Activated CD4-positive, alpha-beta T cell treated with anti-CD3 and anti-CD28 coated beads for 36 hours (primary cell): ENCODE measurements at regions of chr3 and their contacts with region 1.

Region 1: GRCh38 chr3:171187706-171188290 is 161.3 kb upstream of the SLC2A2 start:
- DNase-seq: no peak
- ATAC-seq: no peak
- H3K4me3 Mint-ChIP-seq: no peak overlapping the region
- H3K27ac Mint-ChIP-seq: no peak overlapping the region
- H3K4me1 Mint-ChIP-seq: peaks cover 51% of the 10 kb centered on the region
- H3K27me3 Mint-ChIP-seq: no peaks in the 10 kb centered on the region

Region 2: DNA sequence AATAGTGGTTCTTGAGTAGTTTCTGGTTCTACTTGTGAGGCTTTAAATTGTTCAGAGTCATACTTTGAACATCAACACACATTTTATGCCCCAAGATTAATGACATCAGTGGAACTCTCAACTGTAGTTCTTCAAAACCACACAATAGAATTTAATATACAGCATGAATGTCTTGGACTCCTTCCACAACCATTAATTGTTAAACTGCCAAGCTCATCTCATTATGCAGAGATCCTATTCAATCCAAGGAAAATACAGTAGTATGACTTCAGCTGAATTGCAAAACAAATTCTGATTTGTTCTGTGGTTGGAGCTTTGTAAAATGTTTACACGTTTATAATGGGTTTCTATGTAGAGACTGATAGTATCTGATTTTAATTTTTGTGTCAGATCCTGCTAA is 37.9 kb after region 1 on chr3:
- CTCF ChIA-PET with region 1: interaction called, 3 read pairs
- POLR2A ChIA-PET with region 1: interaction called, 4 read pairs
- intact Hi-C with region 1: loop called (anchors 5 kb)
- DNase-seq: no peak
- ATAC-seq: no peak
- H3K4me3 Mint-ChIP-seq: no peak overlapping the region
- H3K27ac Mint-ChIP-seq: peak overlapping the region; percentile 72
- H3K4me1 Mint-ChIP-seq: peaks cover 46% of the 10 kb centered on the region
- H3K27me3 Mint-ChIP-seq: no peaks in the 10 kb centered on the region

Region 3: GRCh38 chr3:171269542-171269941 is 81.7 kb after region 1 on chr3:
- CTCF ChIA-PET with region 1: no interaction called
- POLR2A ChIA-PET with region 1: no interaction called
- intact Hi-C with region 1: loop called in 1 of 2 experiments (anchors 1 kb)
- DNase-seq: no peak
- ATAC-seq: peak; percentile 51
- H3K4me3 Mint-ChIP-seq: peak overlapping the region; percentile 40
- H3K27ac Mint-ChIP-seq: no peak overlapping the region
- H3K4me1 Mint-ChIP-seq: peaks cover 82% of the 10 kb centered on the region
- H3K27me3 Mint-ChIP-seq: no peaks in the 10 kb centered on the region